Mammary epithelial cell (primary cell): ENCODE measurements at regions of chr15 and their contacts with region 1.

Region 1: DNA sequence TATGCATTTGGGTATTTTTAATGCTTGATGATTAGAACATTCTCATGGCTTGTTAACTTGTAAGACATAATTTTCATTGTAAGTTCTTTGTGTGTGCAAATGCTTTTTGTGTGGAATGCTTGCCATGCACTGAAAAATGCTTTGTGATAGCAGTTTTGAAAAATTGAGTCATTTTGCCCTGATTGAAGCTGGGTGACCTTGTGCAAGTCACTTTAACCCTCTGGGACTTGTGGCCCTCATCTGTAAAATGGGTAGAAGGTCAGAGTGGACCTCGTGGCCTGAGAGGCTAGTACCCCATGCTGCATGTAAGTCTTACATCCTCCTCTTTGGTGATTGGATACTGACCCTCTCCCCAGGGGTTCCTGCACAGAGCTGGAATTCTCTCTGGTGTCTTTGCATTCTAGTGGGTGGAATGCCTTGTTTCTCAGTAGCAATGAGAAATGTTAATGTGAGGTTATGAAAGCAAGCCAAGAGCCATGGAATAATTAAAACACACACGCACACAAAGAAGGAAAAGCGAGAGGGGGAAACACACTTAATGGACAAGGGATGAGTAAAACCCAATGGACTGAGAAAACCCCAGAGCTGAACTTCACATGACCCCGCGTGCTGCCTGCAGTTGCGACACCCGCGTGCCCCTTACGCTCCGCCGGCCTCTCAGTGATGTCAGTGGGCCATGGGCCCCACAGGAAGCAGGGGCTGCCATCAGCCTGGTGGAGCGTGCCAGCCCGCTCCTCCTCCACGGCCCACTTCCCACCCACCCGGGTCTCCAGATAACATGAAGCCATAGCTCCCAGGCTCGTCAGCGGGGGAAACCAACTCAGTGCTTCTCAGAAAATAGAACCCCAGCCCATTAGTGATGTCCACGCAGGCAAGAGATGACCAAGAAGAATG is 44.0 kb downstream of the SMAD3 start:
- DNase-seq: no peak
- H3K4me3 ChIP-seq: no peak overlapping the region
- H3K27ac ChIP-seq: no peak overlapping the region
- H3K4me1 ChIP-seq: peaks cover 44% of the 10 kb centered on the region
- H3K27me3 ChIP-seq: no peaks in the 10 kb centered on the region
- CTCF ChIP-seq: no peak

Region 2: DNA sequence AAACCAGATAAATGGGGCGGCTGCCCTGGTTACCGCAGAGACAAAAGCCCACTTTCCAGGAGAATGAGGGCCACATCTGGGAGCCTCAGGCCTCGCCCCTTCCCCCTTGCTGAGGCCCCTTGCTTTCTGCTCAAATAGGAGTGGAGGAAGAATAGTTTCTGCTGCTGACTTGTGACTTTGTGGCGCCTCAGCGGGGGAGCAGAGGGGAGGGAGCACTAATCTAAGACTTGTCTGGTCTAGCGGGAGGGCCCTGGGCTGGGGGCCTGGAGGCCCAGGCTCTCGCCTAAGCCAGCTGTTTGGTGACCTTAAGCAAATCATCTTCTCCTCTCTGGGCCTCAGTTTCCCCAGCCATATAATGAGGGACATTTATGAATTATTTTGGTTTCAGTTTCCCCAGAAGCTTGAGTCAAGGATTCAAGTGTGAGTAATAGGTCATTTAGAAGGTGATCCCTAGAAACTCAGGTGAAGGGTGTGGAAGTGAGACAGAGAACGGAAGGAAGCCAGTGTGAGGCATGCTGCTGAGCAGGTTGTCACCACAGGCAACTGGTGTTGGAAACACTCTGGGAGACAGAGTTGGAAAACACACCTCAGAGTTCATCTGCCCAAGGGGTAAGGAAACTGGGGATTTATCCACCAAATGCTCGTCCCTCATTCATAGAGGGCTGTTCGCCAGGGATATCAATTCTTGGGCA is 69.9 kb before region 1 on chr15:
- CTCF ChIA-PET with region 1: no interaction called
- dilution Hi-C with region 1: no loop called
- in situ Hi-C with region 1: no loop called
- intact Hi-C with region 1: loop called (anchors 2 kb)
- DNase-seq: peak; percentile 94
- H3K4me3 ChIP-seq: no peak overlapping the region
- H3K27ac ChIP-seq: no peak overlapping the region
- H3K4me1 ChIP-seq: peaks cover 23% of the 10 kb centered on the region
- H3K27me3 ChIP-seq: no peaks in the 10 kb centered on the region
- CTCF ChIP-seq: no peak

Region 3: GRCh38 chr15:67125589-67126502 is 16.5 kb after region 1 on chr15:
- CTCF ChIA-PET with region 1: no interaction called
- dilution Hi-C with region 1: no loop called
- in situ Hi-C with region 1: no loop called
- intact Hi-C with region 1: loop called (anchors 1 kb)
- DNase-seq: peak; percentile 93
- H3K4me3 ChIP-seq: peak overlapping the region in 1 of 3 experiments; percentile 4
- H3K27ac ChIP-seq: peak overlapping the region; percentile 92
- H3K4me1 ChIP-seq: peaks cover 73% of the 10 kb centered on the region
- H3K27me3 ChIP-seq: no peaks in the 10 kb centered on the region
- CTCF ChIP-seq: no peak

Region 4: DNA sequence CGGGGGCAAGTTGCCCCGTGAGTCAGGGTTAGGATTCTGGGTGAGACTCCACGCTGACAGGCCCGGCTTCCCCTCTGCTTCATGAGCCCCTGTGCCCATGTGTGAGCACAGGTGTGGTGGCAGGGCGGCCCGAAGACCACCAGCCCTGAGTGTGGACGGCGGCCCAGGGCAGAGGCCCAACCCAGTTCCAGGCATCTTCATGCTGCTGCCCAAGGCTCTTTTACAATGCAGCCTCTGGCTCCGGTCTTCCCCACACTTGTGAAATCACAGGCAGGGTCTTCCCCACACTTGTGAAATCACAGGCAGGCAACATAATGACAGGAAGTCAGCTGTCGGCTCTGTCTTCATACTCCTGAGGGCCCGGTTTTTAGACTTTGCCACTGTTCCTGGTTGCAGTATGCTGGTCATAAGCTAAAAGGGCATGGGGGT is 66.3 kb after region 1 on chr15:
- CTCF ChIA-PET with region 1: no interaction called
- dilution Hi-C with region 1: no loop called
- in situ Hi-C with region 1: no loop called
- intact Hi-C with region 1: loop called (anchors 1 kb)
- DNase-seq: no peak
- H3K4me3 ChIP-seq: no peak overlapping the region
- H3K27ac ChIP-seq: peak overlapping the region; percentile 79
- H3K4me1 ChIP-seq: peaks cover 55% of the 10 kb centered on the region
- H3K27me3 ChIP-seq: no peaks in the 10 kb centered on the region
- CTCF ChIP-seq: no peak

Region 5: GRCh38 chr15:67188551-67189218 is 79.3 kb after region 1 on chr15:
- CTCF ChIA-PET with region 1: no interaction called
- dilution Hi-C with region 1: no loop called
- in situ Hi-C with region 1: no loop called
- intact Hi-C with region 1: no loop called
- DNase-seq: no peak
- H3K4me3 ChIP-seq: no peak overlapping the region
- H3K27ac ChIP-seq: no peak overlapping the region
- H3K4me1 ChIP-seq: no peaks in the 10 kb centered on the region
- H3K27me3 ChIP-seq: no peaks in the 10 kb centered on the region
- CTCF ChIP-seq: no peak

Region 6: DNA sequence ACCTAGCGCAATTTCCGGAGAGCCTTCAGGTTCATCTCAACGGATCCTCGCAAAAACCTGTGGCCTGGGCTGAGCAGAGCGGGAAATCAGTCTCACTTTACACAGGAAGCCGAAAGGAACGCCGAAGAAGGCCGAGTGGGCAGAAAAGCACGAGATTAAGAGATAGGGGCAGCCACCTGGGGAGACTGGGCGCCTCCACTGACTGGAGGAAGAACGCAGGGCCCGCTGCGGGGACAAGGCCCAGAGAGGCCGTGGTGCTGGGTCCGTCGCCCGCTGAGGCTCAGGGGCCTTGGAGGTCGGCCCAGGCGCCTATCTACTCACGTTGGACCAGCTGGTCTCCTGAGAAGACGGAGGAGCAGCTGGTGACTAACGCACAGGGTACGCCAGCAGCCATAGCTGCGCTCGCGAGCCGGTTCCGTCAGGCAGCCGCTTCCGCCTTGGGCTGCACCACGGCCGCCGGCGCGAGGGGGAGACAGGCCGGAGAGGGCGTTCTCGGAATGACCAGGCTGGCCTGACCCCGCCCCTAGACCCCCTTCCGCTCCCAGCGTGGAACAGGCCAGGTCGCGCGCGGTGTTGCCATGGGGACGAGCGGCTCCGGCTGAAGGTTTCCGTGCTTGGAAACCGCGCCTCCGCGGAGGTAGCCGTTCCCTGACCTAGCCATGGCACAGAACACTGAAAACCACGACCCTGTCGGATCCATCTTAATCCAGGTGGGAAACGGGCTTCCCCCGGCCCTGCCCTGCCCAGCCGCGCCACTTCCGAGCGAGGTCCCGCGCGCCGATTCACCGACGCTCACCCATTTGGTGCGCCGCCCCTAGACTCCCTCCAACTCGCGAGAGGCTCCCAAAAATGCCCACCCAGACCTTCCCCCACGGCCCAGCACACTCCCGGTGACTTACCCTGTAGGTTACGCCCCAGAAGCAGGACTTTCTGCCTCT is 145.1 kb after region 1 on chr15 and contains the starts of genes AAGAB and IQCH:
- CTCF ChIA-PET with region 1: no interaction called
- dilution Hi-C with region 1: no loop called
- in situ Hi-C with region 1: no loop called
- intact Hi-C with region 1: loop called (anchors 5 kb)
- DNase-seq: peak; percentile 99
- H3K4me3 ChIP-seq: peak within 1 kb of the TSS; percentile 66 to 80 (median 78)
- H3K27ac ChIP-seq: peak within 1 kb of the TSS; percentile 98
- H3K4me1 ChIP-seq: no peaks in the 10 kb centered on the region
- H3K27me3 ChIP-seq: no peaks in the 10 kb centered on the region
- CTCF ChIP-seq: no peak
- total RNA-seq, gene AAGAB: 52.2 to 62.5 TPM
- total RNA-seq, gene IQCH: 4.9 to 8.8 TPM

Region 7: DNA sequence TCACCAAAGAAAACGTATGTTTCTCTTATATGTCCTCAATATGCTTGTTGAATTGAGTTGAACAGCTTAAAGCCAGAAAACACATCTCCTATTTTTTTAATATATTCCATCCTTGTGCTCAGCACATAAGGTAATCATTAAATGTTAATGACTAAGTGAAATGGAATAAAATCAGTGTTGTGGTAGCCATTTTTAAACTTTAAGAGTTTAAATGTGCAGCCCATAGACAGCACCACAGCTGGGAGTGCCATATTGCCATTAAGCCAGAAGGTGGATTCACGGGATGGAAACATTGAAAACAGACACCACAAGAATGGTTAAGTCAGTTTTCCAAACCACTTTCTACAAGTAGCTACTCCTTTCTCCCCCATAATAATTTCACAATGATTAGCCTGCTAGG is 334.7 kb after region 1 on chr15:
- CTCF ChIA-PET with region 1: no interaction called
- dilution Hi-C with region 1: no loop called
- in situ Hi-C with region 1: no loop called
- intact Hi-C with region 1: no loop called
- DNase-seq: no peak
- H3K4me3 ChIP-seq: no peak overlapping the region
- H3K27ac ChIP-seq: no peak overlapping the region
- H3K4me1 ChIP-seq: no peaks in the 10 kb centered on the region
- H3K27me3 ChIP-seq: no peaks in the 10 kb centered on the region
- CTCF ChIP-seq: no peak